ENCODE measurements at regions of chr6 and their contacts with region 1.

Region 1: GRCh38 chr6:13336553-13336952 is 8.2 kb upstream of the TBC1D7 start:
- DNase-seq: peak; percentile 55 to 68 (median 66)
- H3K4me3 ChIP-seq: no peak overlapping the region
- H3K4me3 Mint-ChIP-seq: no peak overlapping the region
- H3K27ac ChIP-seq: no peak overlapping the region
- H3K27ac Mint-ChIP-seq: peak overlapping the region in 3 of 7 donors; percentile 31 to 73 (median 35)
- H3K4me1 ChIP-seq: peaks cover 37 to 43% of the 10 kb centered on the region in 2 donors
- H3K4me1 Mint-ChIP-seq: peaks cover 42% of the 10 kb centered on the region
- H3K27me3 ChIP-seq: no peaks in the 10 kb centered on the region
- H3K27me3 Mint-ChIP-seq: peaks cover 0 to 1% (median 0%) of the 10 kb centered on the region in 3 donors
- CTCF ChIP-seq: peak; percentile 94

Region 2: DNA sequence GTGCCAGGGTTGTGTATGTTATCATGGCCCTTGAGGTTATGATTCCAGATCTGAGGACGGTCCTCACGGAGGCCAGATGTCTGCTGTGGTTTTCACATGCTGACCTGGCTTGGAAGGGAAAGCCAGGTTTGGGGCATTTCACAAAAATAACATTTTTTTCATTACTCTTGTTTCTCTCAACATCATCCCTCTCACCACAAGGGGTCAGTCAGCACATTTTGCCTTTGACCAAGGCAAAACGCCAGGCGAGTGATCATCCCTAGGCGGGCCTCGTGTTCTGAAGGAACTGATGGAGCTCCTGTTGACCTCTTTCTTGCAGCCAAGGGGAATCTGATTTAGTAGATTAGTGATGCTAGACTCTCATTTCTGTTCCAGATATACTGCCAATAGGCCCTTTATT is 141.7 kb before region 1 on chr6:
- intact Hi-C with region 1: loop called (anchors 2 to 10 kb)
- DNase-seq: peak; percentile 68 to 74 (median 70)
- H3K4me3 ChIP-seq: no peak overlapping the region
- H3K4me3 Mint-ChIP-seq: peak overlapping the region in 1 of 2 donors; percentile 20
- H3K27ac ChIP-seq: no peak overlapping the region
- H3K27ac Mint-ChIP-seq: peak overlapping the region in 3 of 7 donors; percentile 19 to 72 (median 54)
- H3K4me1 ChIP-seq: no peaks in the 10 kb centered on the region
- H3K4me1 Mint-ChIP-seq: peaks cover 7% of the 10 kb centered on the region
- H3K27me3 ChIP-seq: no peaks in the 10 kb centered on the region
- H3K27me3 Mint-ChIP-seq: peaks cover 0 to 2% (median 0%) of the 10 kb centered on the region in 3 donors
- CTCF ChIP-seq: peak; percentile 77

Region 3: GRCh38 chr6:13362421-13362820 is 25.9 kb after region 1 on chr6:
- intact Hi-C with region 1: no loop called
- DNase-seq: no peak
- H3K4me3 ChIP-seq: no peak overlapping the region
- H3K4me3 Mint-ChIP-seq: no peak overlapping the region
- H3K27ac ChIP-seq: no peak overlapping the region
- H3K27ac Mint-ChIP-seq: no peak overlapping the region
- H3K4me1 ChIP-seq: peaks cover 8 to 12% of the 10 kb centered on the region in 2 donors
- H3K4me1 Mint-ChIP-seq: peaks cover 14% of the 10 kb centered on the region
- H3K27me3 ChIP-seq: no peaks in the 10 kb centered on the region
- H3K27me3 Mint-ChIP-seq: no peaks in the 10 kb centered on the region
- CTCF ChIP-seq: no peak

Region 4: GRCh38 chr6:13395272-13396237 is 59.0 kb after region 1 on chr6:
- intact Hi-C with region 1: loop called in 1 of 2 experiments (anchors 5 kb)
- DNase-seq: peak; percentile 80 to 88 (median 86)
- H3K4me3 ChIP-seq: peak overlapping the region in 2 of 3 experiments; percentile 11 to 59
- H3K4me3 Mint-ChIP-seq: peak overlapping the region; percentile 60 to 85
- H3K27ac ChIP-seq: peak overlapping the region; percentile 95 to 98
- H3K27ac Mint-ChIP-seq: peak overlapping the region; percentile 93 to 99 (median 99)
- H3K4me1 ChIP-seq: peaks cover 38 to 46% of the 10 kb centered on the region in 2 donors
- H3K4me1 Mint-ChIP-seq: peaks cover 37% of the 10 kb centered on the region
- H3K27me3 ChIP-seq: no peaks in the 10 kb centered on the region
- H3K27me3 Mint-ChIP-seq: peaks cover 0 to 4% (median 1%) of the 10 kb centered on the region in 3 donors
- CTCF ChIP-seq: no peak

Region 5: GRCh38 chr6:13466304-13467215 is 130.0 kb after region 1 on chr6:
- intact Hi-C with region 1: loop called in 1 of 2 experiments (anchors 10 kb)
- DNase-seq: peak in 1 of 3 donors; percentile 44
- H3K4me3 ChIP-seq: no peak overlapping the region
- H3K4me3 Mint-ChIP-seq: no peak overlapping the region
- H3K27ac ChIP-seq: peak overlapping the region in 1 of 2 donors; percentile 39
- H3K27ac Mint-ChIP-seq: peak overlapping the region in 6 of 7 donors; percentile 72 to 95 (median 82)
- H3K4me1 ChIP-seq: peaks cover 37 to 39% of the 10 kb centered on the region in 2 donors
- H3K4me1 Mint-ChIP-seq: peaks cover 49% of the 10 kb centered on the region
- H3K27me3 ChIP-seq: no peaks in the 10 kb centered on the region
- H3K27me3 Mint-ChIP-seq: peaks cover 0 to 3% (median 0%) of the 10 kb centered on the region in 3 donors
- CTCF ChIP-seq: no peak

Region 6: DNA sequence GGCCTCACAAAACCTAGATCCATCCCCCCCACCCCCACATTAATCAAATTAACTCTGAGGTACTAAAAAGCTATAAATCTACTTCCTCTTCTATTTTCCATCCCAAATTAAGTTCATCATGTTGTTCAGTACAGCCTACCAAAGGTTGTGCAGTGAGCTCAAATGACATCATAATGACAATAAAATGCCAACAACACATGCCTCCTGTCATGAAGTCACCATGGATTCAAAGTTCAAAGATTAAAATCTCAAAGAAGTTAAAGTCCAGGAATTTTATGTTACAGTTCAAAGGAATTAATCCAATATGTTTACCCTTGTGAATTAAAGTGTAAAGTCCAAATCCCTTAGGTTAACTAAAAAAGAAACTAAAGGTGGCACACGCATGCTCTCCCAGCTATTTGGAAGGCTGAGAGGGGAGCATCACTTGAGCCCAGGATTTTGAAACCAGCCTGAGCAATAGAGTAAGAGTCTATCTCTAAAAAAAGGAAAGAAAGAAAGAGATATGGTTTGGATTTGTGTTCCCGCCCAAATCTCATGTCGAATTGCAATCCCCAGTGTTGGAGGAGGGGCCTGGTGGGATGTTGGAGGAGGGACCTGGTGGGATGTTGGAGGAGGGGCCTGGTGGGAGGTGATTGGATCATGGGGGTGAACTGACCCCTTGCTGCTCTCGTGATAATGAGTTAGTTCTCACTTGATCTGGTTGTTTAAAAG is 212.1 kb after region 1 on chr6:
- intact Hi-C with region 1: loop called in 1 of 2 experiments (anchors 10 kb)
- DNase-seq: no peak
- H3K4me3 ChIP-seq: no peak overlapping the region
- H3K4me3 Mint-ChIP-seq: no peak overlapping the region
- H3K27ac ChIP-seq: no peak overlapping the region
- H3K27ac Mint-ChIP-seq: peak overlapping the region in 1 of 7 donors; percentile 23
- H3K4me1 ChIP-seq: no peaks in the 10 kb centered on the region
- H3K4me1 Mint-ChIP-seq: peaks cover 3% of the 10 kb centered on the region
- H3K27me3 ChIP-seq: no peaks in the 10 kb centered on the region
- H3K27me3 Mint-ChIP-seq: no peaks in the 10 kb centered on the region
- CTCF ChIP-seq: no peak

Region 7: GRCh38 chr6:14417377-14417776 is 1080.8 kb after region 1 on chr6:
- intact Hi-C with region 1: no loop called
- DNase-seq: no peak
- H3K4me3 ChIP-seq: no peak overlapping the region
- H3K4me3 Mint-ChIP-seq: no peak overlapping the region
- H3K27ac ChIP-seq: no peak overlapping the region
- H3K27ac Mint-ChIP-seq: no peak overlapping the region
- H3K4me1 ChIP-seq: no peaks in the 10 kb centered on the region
- H3K4me1 Mint-ChIP-seq: peaks cover 12% of the 10 kb centered on the region
- H3K27me3 ChIP-seq: no peaks in the 10 kb centered on the region
- H3K27me3 Mint-ChIP-seq: peaks cover 0 to 1% (median 1%) of the 10 kb centered on the region in 3 donors
- CTCF ChIP-seq: no peak